ENCODE measurements at regions of chr14 and their contacts with region 1.

Region 1: DNA sequence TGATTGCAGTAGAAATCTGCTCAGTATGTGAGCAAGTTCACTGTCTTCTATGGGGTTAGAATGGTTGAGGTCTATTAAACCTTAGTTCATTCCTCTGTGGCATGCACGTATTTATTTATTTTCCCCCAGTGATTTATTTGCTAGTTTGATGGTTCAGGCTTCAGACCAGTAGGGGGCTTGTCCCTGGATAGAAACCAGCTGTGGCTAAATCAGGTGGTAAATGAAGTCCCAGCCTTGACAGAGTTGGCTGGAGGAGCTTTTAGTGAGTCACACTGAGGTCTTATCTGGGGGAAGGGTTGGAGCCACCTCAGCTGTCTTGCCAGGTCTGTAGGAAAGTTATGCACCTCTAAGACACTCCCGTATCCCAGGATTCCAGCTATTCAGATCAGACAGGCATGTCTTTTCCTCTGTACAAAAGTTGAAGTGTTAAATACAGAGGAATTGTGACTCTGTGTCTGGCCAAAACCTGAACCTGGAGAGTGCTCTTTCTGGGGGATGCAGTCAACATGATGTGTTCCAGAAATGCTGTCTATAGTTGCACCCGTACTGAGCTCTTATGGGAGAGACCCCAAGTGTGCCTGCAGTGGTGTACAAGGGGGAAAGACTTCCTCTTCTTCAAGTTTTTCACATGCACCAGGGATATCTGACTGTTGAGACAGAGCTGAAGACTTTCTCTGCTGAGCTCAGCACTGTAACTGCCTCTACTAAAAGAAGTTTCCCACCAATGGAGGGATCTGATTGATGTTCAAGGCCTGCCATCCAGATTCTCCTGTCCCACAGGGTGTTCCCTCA is 1322.1 kb downstream of the TMEM121 start:
- DNase-seq: peak; percentile 86
- ATAC-seq: peak; percentile 33
- H3K4me3 ChIP-seq: no peak overlapping the region
- H3K27ac ChIP-seq: no peak overlapping the region
- H3K4me1 ChIP-seq: peaks cover 38% of the 10 kb centered on the region
- H3K27me3 ChIP-seq: no peaks in the 10 kb centered on the region
- CTCF ChIP-seq: peak; percentile 55

Region 2: DNA sequence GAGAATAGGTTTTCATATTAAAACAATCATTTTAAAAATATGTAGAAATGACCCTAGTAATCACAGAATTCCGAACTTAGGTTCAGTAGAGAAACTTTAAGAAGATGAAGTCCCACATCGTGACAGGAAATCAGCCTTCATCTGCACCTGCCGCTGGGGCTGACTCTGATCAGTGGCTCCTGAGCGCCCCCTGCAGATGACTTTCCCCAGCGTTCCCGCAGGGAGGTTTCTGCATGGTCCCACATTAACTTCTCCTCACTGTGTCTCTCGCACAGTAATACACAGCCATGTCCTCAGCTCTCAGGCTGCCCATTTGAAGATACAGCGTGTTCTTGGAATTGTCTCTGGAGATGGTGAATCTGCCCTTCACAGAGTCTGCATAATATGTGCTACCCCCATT is 191.1 kb before region 1 on chr14:
- CTCF ChIA-PET with region 1: no interaction called
- POLR2A ChIA-PET with region 1: no interaction called
- intact Hi-C with region 1: no loop called
- DNase-seq: no peak
- ATAC-seq: no peak
- H3K4me3 ChIP-seq: no peak overlapping the region
- H3K27ac ChIP-seq: no peak overlapping the region
- H3K4me1 ChIP-seq: no peaks in the 10 kb centered on the region
- H3K27me3 ChIP-seq: no peaks in the 10 kb centered on the region
- CTCF ChIP-seq: 0 out of 2 replicates have a peak, but pooled peaks have one; percentile 8

Region 3: GRCh38 chr14:106872611-106873446 is 24.3 kb after region 1 on chr14:
- CTCF ChIA-PET with region 1: interaction called, 11 read pairs
- POLR2A ChIA-PET with region 1: interaction called, 3 read pairs
- intact Hi-C with region 1: loop called (anchors 1 kb)
- DNase-seq: peak; percentile 83
- ATAC-seq: peak; percentile 96
- H3K4me3 ChIP-seq: peak overlapping the region; percentile 25; the same call in 1 of the 2 replicates
- H3K27ac ChIP-seq: no peak overlapping the region
- H3K4me1 ChIP-seq: 0 out of 2 replicates have a peak, but pooled peaks cover 2% of the 10 kb centered on the region
- H3K27me3 ChIP-seq: no peaks in the 10 kb centered on the region
- CTCF ChIP-seq: peak; percentile 60